Endothelial cell of umbilical vein (primary cell): ENCODE measurements at regions of chr6 and their contacts with region 1.

Region 1: GRCh38 chr6:50128420-50129005 is 78.8 kb upstream of the DEFB112 start:
- DNase-seq: peak; percentile 14
- H3K4me3 ChIP-seq: no peak overlapping the region
- H3K27ac ChIP-seq: no peak overlapping the region
- H3K4me1 ChIP-seq: no peaks in the 10 kb centered on the region
- H3K27me3 ChIP-seq: no peaks in the 10 kb centered on the region
- CTCF ChIP-seq: no peak
- POLR2A ChIP-seq: no peak

Region 2: GRCh38 chr6:50211582-50211981 is 83.1 kb after region 1 on chr6:
- CTCF ChIA-PET with region 1: no interaction called
- POLR2A ChIA-PET with region 1: no interaction called
- dilution Hi-C with region 1: no loop called
- intact Hi-C with region 1: no loop called
- DNase-seq: no peak
- H3K4me3 ChIP-seq: no peak overlapping the region
- H3K27ac ChIP-seq: no peak overlapping the region
- H3K4me1 ChIP-seq: no peaks in the 10 kb centered on the region
- H3K27me3 ChIP-seq: no peaks in the 10 kb centered on the region
- CTCF ChIP-seq: no peak
- POLR2A ChIP-seq: no peak

Region 3: DNA sequence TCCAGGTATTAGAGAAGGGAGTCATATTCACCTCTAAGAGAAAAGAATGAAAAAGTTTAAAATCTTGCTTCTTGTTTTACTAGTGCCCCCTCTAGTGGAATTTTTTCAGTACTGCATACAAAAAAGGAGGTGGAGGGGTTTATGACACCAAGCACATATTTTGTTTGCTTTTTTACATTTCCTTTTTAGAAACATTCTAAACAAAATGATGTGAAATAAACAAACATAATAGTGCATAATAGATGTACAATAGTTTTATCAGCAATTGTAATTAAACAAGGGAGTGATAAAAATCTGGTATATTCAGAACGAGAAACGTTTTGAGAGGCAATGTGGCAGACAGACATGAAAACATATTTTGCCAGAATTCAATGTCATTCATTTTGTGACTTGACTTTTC is 473.8 kb after region 1 on chr6:
- CTCF ChIA-PET with region 1: interaction called, 16 read pairs
- POLR2A ChIA-PET with region 1: no interaction called
- dilution Hi-C with region 1: no loop called
- intact Hi-C with region 1: loop called (anchors 2 kb)
- DNase-seq: peak; percentile 37
- H3K4me3 ChIP-seq: no peak overlapping the region
- H3K27ac ChIP-seq: no peak overlapping the region
- H3K4me1 ChIP-seq: no peaks in the 10 kb centered on the region
- H3K27me3 ChIP-seq: no peaks in the 10 kb centered on the region
- CTCF ChIP-seq: peak; percentile 44 to 48
- POLR2A ChIP-seq: no peak

Region 4: GRCh38 chr6:50791900-50792508 is 663.5 kb after region 1 on chr6:
- CTCF ChIA-PET with region 1: interaction called, 11 read pairs
- POLR2A ChIA-PET with region 1: no interaction called
- dilution Hi-C with region 1: no loop called
- intact Hi-C with region 1: loop called (anchors 1 kb)
- DNase-seq: peak; percentile 50
- H3K4me3 ChIP-seq: no peak overlapping the region
- H3K27ac ChIP-seq: no peak overlapping the region
- H3K4me1 ChIP-seq: no peaks in the 10 kb centered on the region
- H3K27me3 ChIP-seq: no peaks in the 10 kb centered on the region
- CTCF ChIP-seq: peak; percentile 46 to 54
- POLR2A ChIP-seq: no peak

Region 5: DNA sequence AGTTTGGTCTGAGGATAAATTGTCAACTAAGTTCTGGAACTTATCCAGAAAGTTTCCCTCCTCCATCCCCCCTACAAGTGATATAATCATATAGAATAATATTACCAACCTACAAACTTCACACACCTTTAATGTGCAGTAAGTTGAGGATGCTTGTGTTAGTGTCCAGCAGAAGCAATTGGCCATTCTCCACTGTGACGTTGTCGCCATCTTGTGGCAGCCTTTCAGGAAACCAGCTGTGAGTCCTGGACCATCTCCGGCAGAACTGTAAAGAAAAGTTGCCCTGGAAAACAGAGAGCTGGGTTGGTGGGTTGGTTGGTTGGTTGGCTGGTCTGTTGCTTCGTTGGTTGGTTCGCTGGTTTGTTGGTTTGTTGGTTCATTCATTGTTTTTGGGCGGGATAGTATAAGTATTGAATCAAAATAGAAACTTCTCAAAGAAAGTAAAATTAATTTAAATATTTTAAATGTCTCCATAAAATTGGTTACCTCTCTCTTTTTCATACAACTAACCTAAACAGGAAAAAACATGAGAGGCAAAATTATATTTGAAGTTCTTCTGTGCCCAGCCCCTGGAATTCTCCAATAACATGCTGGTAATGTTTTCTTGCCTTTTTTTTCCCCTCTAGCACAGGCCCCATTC is 1831.4 kb after region 1 on chr6:
- CTCF ChIA-PET with region 1: interaction called, 12 read pairs
- POLR2A ChIA-PET with region 1: no interaction called
- dilution Hi-C with region 1: no loop called
- intact Hi-C with region 1: loop called (anchors 5 kb)
- DNase-seq: peak; percentile 60
- H3K4me3 ChIP-seq: no peak overlapping the region
- H3K27ac ChIP-seq: no peak overlapping the region
- H3K4me1 ChIP-seq: no peaks in the 10 kb centered on the region
- H3K27me3 ChIP-seq: no peaks in the 10 kb centered on the region
- CTCF ChIP-seq: peak; percentile 58 to 71
- POLR2A ChIP-seq: no peak

Region 6: DNA sequence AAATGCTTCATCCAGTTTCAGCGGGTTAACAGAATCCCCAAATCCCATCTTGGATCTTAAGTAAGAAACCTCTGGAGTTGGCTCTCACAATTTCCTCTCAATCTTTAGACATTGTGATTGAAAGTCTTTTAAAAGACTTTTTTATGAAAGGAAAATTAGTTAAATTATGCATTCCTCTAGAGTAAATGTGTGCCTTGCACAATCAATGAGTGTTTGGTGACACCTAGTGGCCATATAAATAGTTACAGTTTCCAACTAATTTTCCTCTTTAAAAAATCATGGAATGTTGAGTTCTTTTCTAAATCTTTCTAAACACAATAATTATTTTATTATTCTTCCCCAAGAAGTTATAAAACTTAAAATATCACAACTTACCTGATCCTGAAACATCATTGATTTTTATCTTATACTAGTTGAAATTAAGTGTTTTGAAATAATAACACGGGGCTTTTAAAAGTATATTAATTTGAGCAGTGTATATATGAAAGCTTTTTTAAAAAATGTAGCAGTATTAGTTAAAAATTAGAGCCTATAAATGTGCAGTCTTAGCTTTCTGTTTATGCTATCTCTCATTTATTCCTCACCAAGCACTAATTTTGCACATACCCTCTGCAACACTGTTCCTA is 1892.5 kb after region 1 on chr6:
- CTCF ChIA-PET with region 1: interaction called, 19 read pairs
- POLR2A ChIA-PET with region 1: no interaction called
- dilution Hi-C with region 1: no loop called
- intact Hi-C with region 1: no loop called
- DNase-seq: peak; percentile 33
- H3K4me3 ChIP-seq: no peak overlapping the region
- H3K27ac ChIP-seq: no peak overlapping the region
- H3K4me1 ChIP-seq: no peaks in the 10 kb centered on the region
- H3K27me3 ChIP-seq: no peaks in the 10 kb centered on the region
- CTCF ChIP-seq: peak in 1 of 2 donors; percentile 41
- POLR2A ChIP-seq: no peak